A549 (cell line): ENCODE measurements at regions of chr17 and their contacts with region 1.

Region 1: DNA sequence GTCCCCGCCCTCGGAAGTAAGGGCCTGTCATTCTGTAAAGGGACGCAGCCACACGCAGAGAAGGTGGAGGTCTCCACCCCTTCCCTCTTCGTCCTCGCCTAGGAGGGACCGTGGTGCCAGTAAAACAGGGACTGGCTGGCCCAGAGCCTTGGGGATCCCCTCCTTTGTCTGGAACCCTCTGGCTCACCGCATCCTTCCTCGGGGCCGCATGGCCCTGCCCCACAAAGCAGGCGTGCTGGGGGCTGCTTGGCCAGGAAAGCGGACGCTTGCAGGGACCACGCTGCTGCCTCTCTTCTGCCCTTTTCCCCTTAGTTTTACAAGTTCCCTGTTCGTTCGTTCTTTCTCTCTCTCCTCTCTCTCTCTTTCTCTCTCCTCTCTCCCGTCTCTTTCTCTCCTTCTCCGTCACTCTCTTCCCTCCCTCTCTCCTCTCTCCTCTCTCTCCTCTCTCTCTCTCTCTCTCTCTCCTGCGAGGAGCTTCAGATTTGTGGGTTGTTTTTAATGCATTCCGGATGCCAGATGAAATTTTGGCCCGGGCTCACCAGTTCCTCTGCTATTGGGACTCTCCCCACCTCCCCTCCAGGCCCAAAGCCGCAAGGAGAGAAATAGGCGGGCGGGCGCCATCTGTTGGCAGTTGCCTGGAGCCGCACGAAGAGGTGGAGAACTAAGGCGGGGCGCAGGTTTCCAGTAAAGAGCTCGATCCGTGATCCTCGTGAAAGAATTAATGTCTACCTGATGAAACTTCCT is 35.1 kb upstream of the CDRT4 start:
- DNase-seq: peak; percentile 71 to 76
- ATAC-seq: peak; percentile 89 to 97
- H3K4me3 ChIP-seq: no peak overlapping the region
- H3K27ac ChIP-seq: peak overlapping the region; percentile 9 to 56; a peak in 2 of 6 replicates
- H3K4me1 ChIP-seq: peaks cover 5% of the 10 kb centered on the region; the same call in 1 of the 3 replicates
- CTCF ChIP-seq: peak; percentile 93
- EP300 ChIP-seq: no peak
- POLR2A ChIP-seq: no peak
- RAD21 ChIP-seq: peak; percentile 95 to 97

Region 2: DNA sequence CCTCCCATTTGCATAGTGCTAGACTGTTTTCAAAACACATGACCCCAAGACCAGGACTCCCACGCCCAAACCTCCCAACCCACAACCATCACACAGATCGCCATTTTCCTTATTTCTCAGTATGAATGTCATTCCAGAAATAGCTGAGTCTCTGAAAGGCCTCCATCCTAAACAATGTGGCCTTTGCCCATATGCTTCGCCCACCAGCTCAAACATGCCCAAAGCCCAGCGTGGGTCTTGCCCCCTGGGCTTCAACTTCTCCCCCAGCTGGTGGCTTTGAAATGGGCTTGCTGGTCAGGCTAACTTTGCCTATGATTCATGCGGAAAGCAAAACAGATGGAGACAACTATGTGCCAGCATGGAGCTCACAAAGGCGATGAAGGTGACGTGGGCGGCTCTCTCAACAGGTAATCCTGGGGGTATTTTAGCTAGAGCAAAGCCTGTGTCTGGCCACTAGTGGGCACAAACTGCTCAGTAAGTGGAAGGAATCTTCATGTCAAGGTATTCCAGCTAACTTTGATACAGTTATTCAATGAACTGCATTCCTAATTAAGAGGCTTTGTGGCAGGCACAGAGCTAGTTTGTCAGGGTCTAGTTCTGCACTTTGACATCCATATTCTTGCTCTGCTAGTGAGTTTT is 254.5 kb before region 1 on chr17:
- CTCF ChIA-PET with region 1: interaction called, 78 read pairs
- POLR2A ChIA-PET with region 1: no interaction called
- DNase-seq: peak; percentile 31 to 47
- ATAC-seq: peak; percentile 47 to 58; a peak in 3 of 6 replicates
- H3K4me3 ChIP-seq: no peak overlapping the region
- H3K27ac ChIP-seq: no peak overlapping the region
- H3K4me1 ChIP-seq: no peaks in the 10 kb centered on the region
- CTCF ChIP-seq: peak; percentile 51
- EP300 ChIP-seq: no peak
- POLR2A ChIP-seq: no peak
- RAD21 ChIP-seq: peak; percentile 47 to 67; a peak in 3 of 5 replicates

Region 3: DNA sequence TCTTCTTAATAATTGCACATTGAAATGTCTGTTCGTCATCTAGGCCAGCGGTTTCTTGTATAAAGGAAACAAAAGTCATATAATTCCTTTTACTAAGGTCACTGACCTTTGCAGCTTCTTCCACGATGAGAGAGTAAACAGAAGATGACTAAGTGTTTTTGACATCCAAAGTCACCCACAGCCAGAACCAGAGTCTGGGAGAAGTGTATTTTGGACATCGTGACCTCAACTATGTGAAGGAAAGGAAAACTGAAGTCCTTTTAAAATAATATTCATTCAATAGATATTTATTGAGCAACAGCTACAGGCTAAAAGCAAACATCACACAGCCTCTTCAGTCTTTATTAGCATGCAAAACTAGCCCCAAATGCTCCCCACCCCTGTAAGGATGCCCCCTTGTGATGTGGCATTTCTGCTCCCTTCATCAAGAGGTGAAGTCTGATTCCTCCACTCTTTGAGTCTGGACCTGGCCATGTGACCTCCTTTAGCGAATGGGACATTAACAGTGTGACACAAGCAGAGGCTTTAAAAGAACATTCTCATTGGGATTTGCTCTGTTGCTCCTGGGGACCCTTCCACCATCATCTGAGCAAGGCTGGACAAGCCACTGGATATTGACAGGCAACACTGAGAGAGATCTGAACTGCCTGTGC is 229.3 kb before region 1 on chr17:
- CTCF ChIA-PET with region 1: interaction called, 25 read pairs
- POLR2A ChIA-PET with region 1: no interaction called
- DNase-seq: peak; percentile 73 to 89
- ATAC-seq: peak; percentile 83 to 89
- H3K4me3 ChIP-seq: 0 out of 3 replicates have a peak overlapping the region, but pooled peaks have one; percentile 3
- H3K27ac ChIP-seq: peak overlapping the region; percentile 76 to 80
- H3K4me1 ChIP-seq: peaks cover 42% of the 10 kb centered on the region
- CTCF ChIP-seq: peak; percentile 21; the same call in 1 of the 3 replicates
- EP300 ChIP-seq: peak; percentile 53 to 65; a peak in 2 of 5 replicates
- POLR2A ChIP-seq: no peak
- RAD21 ChIP-seq: no peak; a peak in 1 of 5 replicates

Region 4: GRCh38 chr17:15341385-15341849 is 161.1 kb before region 1 on chr17 and contains the start of gene TEKT3:
- CTCF ChIA-PET with region 1: interaction called, 11 read pairs
- POLR2A ChIA-PET with region 1: no interaction called
- DNase-seq: peak; percentile 81 to 90
- ATAC-seq: peak; percentile 100
- H3K4me3 ChIP-seq: peak within 1 kb of the TSS; percentile 52
- H3K27ac ChIP-seq: peak within 1 kb of the TSS in 1 of 2 experiments; percentile 51; a peak in 3 of 6 replicates
- H3K4me1 ChIP-seq: peaks cover 10% of the 10 kb centered on the region
- CTCF ChIP-seq: no peak
- EP300 ChIP-seq: no peak
- POLR2A ChIP-seq: no peak
- RAD21 ChIP-seq: no peak
- polyA plus RNA-seq, gene TEKT3: 0.21 and 0.49 TPM in 2 replicates

Region 5: GRCh38 chr17:15469260-15469659 is 33.3 kb before region 1 on chr17:
- CTCF ChIA-PET with region 1: interaction called, 12 read pairs
- POLR2A ChIA-PET with region 1: no interaction called
- DNase-seq: no peak
- ATAC-seq: no peak
- H3K4me3 ChIP-seq: no peak overlapping the region
- H3K27ac ChIP-seq: no peak overlapping the region
- H3K4me1 ChIP-seq: peaks cover 3% of the 10 kb centered on the region
- CTCF ChIP-seq: no peak
- EP300 ChIP-seq: no peak
- POLR2A ChIP-seq: no peak
- RAD21 ChIP-seq: no peak

Region 6: GRCh38 chr17:15513058-15513858 is 10.7 kb after region 1 on chr17:
- CTCF ChIA-PET with region 1: interaction called, 31 read pairs
- POLR2A ChIA-PET with region 1: no interaction called
- DNase-seq: no peak
- ATAC-seq: no peak
- H3K4me3 ChIP-seq: no peak overlapping the region
- H3K27ac ChIP-seq: no peak overlapping the region
- H3K4me1 ChIP-seq: peaks cover 11% of the 10 kb centered on the region
- CTCF ChIP-seq: no peak
- EP300 ChIP-seq: no peak
- POLR2A ChIP-seq: no peak
- RAD21 ChIP-seq: no peak